ENCODE measurements at regions of chr2 and their contacts with region 1.

Region 1: GRCh38 chr2:227471924-227472264 is at the start of gene AGFG1:
- DNase-seq: peak; percentile 69 to 90 (median 83)
- ATAC-seq: peak; percentile 84
- H3K4me3 ChIP-seq: peak within 1 kb of the TSS; percentile 69
- H3K4me3 Mint-ChIP-seq: peak within 1 kb of the TSS; percentile 96
- H3K27ac ChIP-seq: peak within 1 kb of the TSS in 1 of 2 donors; percentile 41
- H3K27ac Mint-ChIP-seq: peak within 1 kb of the TSS; percentile 91
- H3K4me1 ChIP-seq: peaks cover 18% of the 10 kb centered on the region
- H3K4me1 Mint-ChIP-seq: peaks cover 64% of the 10 kb centered on the region
- H3K27me3 ChIP-seq: no peaks in the 10 kb centered on the region
- H3K27me3 Mint-ChIP-seq: no peaks in the 10 kb centered on the region
- CTCF ChIP-seq: peak; percentile 98
- total RNA-seq, gene AGFG1: 49.9 to 55.9 TPM

Region 2: DNA sequence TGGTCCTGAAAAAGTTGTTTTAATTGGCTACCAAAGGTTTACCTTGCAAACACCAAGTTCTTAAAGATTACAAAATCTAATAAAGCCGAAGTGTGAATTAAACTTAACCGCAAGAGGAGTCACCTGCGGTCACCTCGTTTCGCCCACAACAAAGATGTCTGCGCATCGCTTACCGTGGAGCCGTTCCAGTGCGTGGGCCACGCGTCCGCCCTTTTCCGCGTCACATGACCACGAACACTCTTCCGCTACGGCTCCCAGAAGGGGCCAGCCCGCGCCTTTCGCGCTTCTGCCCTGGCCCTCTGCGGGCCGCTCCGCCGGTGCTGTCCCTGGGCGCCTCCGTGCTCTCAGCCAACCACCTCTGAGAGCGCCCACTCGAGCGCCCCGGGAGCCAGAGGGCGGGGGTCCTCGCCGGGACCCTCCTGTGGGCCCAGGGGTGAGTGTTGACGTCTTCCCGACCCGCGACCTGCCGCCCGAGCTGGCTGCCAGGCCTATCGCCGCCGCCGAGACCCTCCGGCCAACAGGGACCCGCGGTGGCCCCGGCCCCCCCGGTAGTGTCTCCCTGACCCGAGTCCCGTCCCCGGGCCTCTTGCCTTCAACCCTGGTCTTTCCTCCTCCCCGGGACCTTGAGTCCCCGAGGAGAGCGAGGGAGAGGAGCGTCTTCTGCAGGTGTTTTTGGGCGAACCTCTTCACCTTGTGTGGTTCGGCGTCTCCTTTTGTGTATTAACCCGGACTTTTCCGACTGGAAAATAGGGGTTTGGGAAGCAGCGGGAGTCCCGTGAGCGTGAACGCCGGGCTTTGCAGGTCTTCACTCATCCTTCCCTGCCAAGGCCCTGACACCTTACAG is 146.7 kb before region 1 on chr2 and contains the start of gene MFF:
- CTCF ChIA-PET with region 1: no interaction called
- POLR2A ChIA-PET with region 1: no interaction called
- intact Hi-C with region 1: loop called in 1 of 2 experiments (anchors 5 kb)
- DNase-seq: peak; percentile 84 to 97 (median 90)
- ATAC-seq: peak; percentile 97
- H3K4me3 ChIP-seq: peak within 1 kb of the TSS; percentile 82
- H3K4me3 Mint-ChIP-seq: peak within 1 kb of the TSS; percentile 94
- H3K27ac ChIP-seq: peak within 1 kb of the TSS; percentile 33 to 51
- H3K27ac Mint-ChIP-seq: peak within 1 kb of the TSS; percentile 92
- H3K4me1 ChIP-seq: peaks cover 22% of the 10 kb centered on the region
- H3K4me1 Mint-ChIP-seq: peaks cover 57% of the 10 kb centered on the region
- H3K27me3 ChIP-seq: no peaks in the 10 kb centered on the region
- H3K27me3 Mint-ChIP-seq: no peaks in the 10 kb centered on the region
- CTCF ChIP-seq: peak; percentile 36
- total RNA-seq, gene MFF: 46.9 to 51.8 TPM

Region 3: GRCh38 chr2:227534714-227535113 is 62.8 kb after region 1 on chr2:
- CTCF ChIA-PET with region 1: no interaction called
- POLR2A ChIA-PET with region 1: no interaction called
- intact Hi-C with region 1: loop called in 1 of 2 experiments (anchors 10 kb)
- DNase-seq: no peak
- ATAC-seq: no peak
- H3K4me3 ChIP-seq: no peak overlapping the region
- H3K4me3 Mint-ChIP-seq: no peak overlapping the region
- H3K27ac ChIP-seq: no peak overlapping the region
- H3K27ac Mint-ChIP-seq: no peak overlapping the region
- H3K4me1 ChIP-seq: no peaks in the 10 kb centered on the region
- H3K4me1 Mint-ChIP-seq: no peaks in the 10 kb centered on the region
- H3K27me3 ChIP-seq: no peaks in the 10 kb centered on the region
- H3K27me3 Mint-ChIP-seq: no peaks in the 10 kb centered on the region
- CTCF ChIP-seq: no peak

Measured in CD4-positive, alpha-beta T cell (primary cell).